ENCODE measurements at regions of chr3 and their contacts with region 1.

Region 1: DNA sequence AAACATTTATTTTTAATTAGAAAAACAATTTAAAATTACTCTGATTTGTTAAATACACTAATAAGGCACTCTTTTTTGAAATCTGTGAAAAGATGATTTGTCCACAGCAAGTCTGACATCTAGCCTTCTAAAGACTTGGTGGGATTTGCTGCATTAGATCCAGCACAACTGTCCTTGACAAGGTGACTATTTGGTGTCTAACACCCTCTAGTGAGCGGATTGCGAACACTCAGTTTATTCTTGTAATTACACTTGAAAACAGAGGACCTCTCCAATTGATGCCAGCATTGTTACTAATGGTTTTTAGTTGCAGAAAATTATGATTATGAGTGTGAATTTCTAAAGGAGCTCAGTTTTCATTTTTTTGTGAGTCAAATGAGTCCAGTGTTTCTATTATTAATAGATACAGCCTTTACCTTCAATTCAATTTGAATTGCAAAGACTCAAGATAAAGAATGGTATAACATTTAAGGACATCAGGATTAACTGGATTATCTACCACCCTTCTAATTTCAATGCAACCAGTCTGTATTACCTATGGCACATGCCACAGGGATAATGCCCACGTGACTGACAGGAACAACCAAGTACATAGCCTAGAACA is 29.7 kb upstream of the STRIT1 start:
- DNase-seq: peak; percentile 33 to 39
- ATAC-seq: peak; percentile 93 to 95
- H3K4me3 ChIP-seq: no peak overlapping the region
- H3K27ac ChIP-seq: peak overlapping the region in 2 of 4 donors; percentile 45 to 70
- H3K4me1 ChIP-seq: peaks cover 0 to 12% of the 10 kb centered on the region in 2 donors
- H3K27me3 ChIP-seq: no peaks in the 10 kb centered on the region
- CTCF ChIP-seq: peak; percentile 62 to 81 (median 74)
- POLR2A ChIP-seq: no peak

Region 2: DNA sequence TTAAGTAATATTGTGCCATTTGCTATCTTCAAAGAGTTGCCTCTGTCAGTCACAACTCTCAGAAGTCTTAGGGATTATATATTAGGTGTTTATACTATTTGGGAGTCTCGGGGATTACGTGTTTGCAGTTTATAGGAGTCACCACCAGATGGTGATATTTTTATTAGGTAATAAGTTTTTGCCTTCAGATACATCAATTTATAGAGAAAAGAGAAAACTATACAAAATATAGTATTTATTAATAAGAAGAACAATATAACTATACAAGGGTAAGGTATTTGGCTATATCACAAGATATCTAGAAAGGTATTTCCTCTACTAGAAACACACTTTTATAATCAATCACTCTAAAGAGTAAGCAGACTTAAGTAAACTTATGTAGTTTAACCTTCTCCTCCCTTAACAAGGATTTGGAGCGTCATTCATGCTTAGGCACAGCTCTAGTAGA is 988.2 kb before region 1 on chr3:
- in situ Hi-C with region 1: loop called (anchors 10 to 25 kb)
- intact Hi-C with region 1: loop called (anchors 5 kb)
- DNase-seq: no peak
- ATAC-seq: peak in 1 of 2 donors; percentile 54
- H3K4me3 ChIP-seq: no peak overlapping the region
- H3K27ac ChIP-seq: no peak overlapping the region
- H3K4me1 ChIP-seq: no peaks in the 10 kb centered on the region
- H3K27me3 ChIP-seq: peaks cover 0 to 3% (median 0%) of the 10 kb centered on the region in 3 donors
- CTCF ChIP-seq: peak; percentile 34 to 68 (median 42)
- POLR2A ChIP-seq: no peak

Region 3: GRCh38 chr3:154766765-154767503 is 556.2 kb before region 1 on chr3:
- in situ Hi-C with region 1: loop called in 3 of 4 experiments (anchors 5 to 10 kb)
- intact Hi-C with region 1: no loop called
- DNase-seq: no peak
- ATAC-seq: no peak
- H3K4me3 ChIP-seq: no peak overlapping the region
- H3K27ac ChIP-seq: no peak overlapping the region
- H3K4me1 ChIP-seq: no peaks in the 10 kb centered on the region
- H3K27me3 ChIP-seq: no peaks in the 10 kb centered on the region
- CTCF ChIP-seq: no peak
- POLR2A ChIP-seq: no peak

Region 4: GRCh38 chr3:154967090-154967489 is 356.1 kb before region 1 on chr3:
- in situ Hi-C with region 1: loop called in 3 of 4 experiments (anchors 10 to 25 kb)
- intact Hi-C with region 1: no loop called
- DNase-seq: no peak
- ATAC-seq: no peak
- H3K4me3 ChIP-seq: no peak overlapping the region
- H3K27ac ChIP-seq: no peak overlapping the region
- H3K4me1 ChIP-seq: peaks cover 0 to 14% of the 10 kb centered on the region in 2 donors
- H3K27me3 ChIP-seq: no peaks in the 10 kb centered on the region
- CTCF ChIP-seq: no peak
- POLR2A ChIP-seq: no peak

Region 5: GRCh38 chr3:155185631-155186071 is 137.5 kb before region 1 on chr3:
- in situ Hi-C with region 1: no loop called
- intact Hi-C with region 1: loop called (anchors 5 kb)
- DNase-seq: no peak
- ATAC-seq: peak; percentile 35 to 57
- H3K4me3 ChIP-seq: no peak overlapping the region
- H3K27ac ChIP-seq: peak overlapping the region in 2 of 4 donors; percentile 8 to 19
- H3K4me1 ChIP-seq: peaks cover 11 to 47% of the 10 kb centered on the region in 2 donors
- H3K27me3 ChIP-seq: no peaks in the 10 kb centered on the region
- CTCF ChIP-seq: no peak
- POLR2A ChIP-seq: no peak

Region 6: GRCh38 chr3:155232605-155233004 is 90.6 kb before region 1 on chr3:
- in situ Hi-C with region 1: no loop called
- intact Hi-C with region 1: no loop called
- DNase-seq: peak; percentile 90 to 97
- ATAC-seq: peak; percentile 91 to 94
- H3K4me3 ChIP-seq: peak overlapping the region in 2 of 4 donors; percentile 9 to 16
- H3K27ac ChIP-seq: peak overlapping the region; percentile 93 to 98 (median 94)
- H3K4me1 ChIP-seq: peaks cover 18 to 22% of the 10 kb centered on the region in 2 donors
- H3K27me3 ChIP-seq: no peaks in the 10 kb centered on the region
- CTCF ChIP-seq: no peak
- POLR2A ChIP-seq: no peak

Region 7: DNA sequence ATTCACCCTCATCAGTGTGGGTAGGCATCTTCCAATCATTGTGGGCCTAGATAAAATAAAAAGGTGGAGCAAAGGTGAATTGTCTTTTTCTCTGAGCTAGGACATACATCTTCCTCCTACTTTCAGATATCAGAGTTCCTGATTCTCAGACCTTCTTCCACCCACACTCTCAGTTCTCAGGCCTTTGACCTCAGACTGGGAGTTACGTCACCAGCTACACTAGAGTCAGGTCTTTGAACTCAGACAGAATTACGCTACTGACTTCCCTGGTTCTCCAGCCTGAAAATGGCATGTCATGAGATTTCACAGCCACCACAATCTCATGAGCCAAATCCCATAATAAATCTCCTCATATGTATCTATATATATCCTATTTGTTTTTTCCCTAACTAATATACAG is 68.7 kb before region 1 on chr3:
- in situ Hi-C with region 1: no loop called
- intact Hi-C with region 1: no loop called
- DNase-seq: no peak
- ATAC-seq: no peak
- H3K4me3 ChIP-seq: no peak overlapping the region
- H3K27ac ChIP-seq: no peak overlapping the region
- H3K4me1 ChIP-seq: no peaks in the 10 kb centered on the region
- H3K27me3 ChIP-seq: no peaks in the 10 kb centered on the region
- CTCF ChIP-seq: no peak
- POLR2A ChIP-seq: no peak

Region 8: DNA sequence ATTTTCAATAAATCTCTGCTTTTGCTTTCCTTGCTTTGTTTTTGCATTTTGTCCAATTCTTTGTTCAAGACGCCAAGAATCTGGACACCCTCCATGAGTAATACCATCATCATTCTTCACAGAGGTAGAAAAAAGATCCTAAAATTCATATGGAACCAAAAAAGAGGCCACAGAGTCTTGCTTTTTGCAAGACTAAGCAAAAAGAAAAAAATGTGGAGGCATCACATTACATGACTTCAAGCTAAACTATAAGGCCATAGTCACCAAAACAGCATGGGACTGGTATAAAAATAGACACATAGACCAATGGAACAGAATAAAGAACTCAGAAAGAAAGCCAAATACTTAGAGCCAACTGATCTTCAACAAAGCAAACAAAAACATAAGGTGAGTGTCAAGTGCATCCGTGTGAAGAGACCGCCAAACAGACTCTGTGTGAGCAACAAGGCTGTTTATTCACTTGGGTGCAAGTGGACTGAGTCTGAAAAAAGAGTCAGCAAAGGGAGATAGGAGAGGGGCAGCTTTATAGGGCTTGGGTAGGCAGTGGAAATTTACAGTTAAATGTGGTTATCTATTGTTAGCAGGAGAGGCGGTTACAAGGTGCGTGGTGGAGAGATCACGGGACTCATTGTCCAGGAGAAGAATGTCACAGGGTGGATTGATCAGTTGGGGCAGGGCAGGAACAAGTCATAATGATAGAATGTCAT is 40.6 kb before region 1 on chr3:
- in situ Hi-C with region 1: no loop called
- intact Hi-C with region 1: no loop called
- DNase-seq: no peak
- ATAC-seq: peak; percentile 40 to 59
- H3K4me3 ChIP-seq: no peak overlapping the region
- H3K27ac ChIP-seq: peak overlapping the region; percentile 55 to 91 (median 76)
- H3K4me1 ChIP-seq: peaks cover 14 to 23% of the 10 kb centered on the region in 2 donors
- H3K27me3 ChIP-seq: no peaks in the 10 kb centered on the region
- CTCF ChIP-seq: no peak
- POLR2A ChIP-seq: no peak